Pancreas (tissue), 10 donors: ENCODE measurements at regions of chr13 and their contacts with region 1.

Region 1: DNA sequence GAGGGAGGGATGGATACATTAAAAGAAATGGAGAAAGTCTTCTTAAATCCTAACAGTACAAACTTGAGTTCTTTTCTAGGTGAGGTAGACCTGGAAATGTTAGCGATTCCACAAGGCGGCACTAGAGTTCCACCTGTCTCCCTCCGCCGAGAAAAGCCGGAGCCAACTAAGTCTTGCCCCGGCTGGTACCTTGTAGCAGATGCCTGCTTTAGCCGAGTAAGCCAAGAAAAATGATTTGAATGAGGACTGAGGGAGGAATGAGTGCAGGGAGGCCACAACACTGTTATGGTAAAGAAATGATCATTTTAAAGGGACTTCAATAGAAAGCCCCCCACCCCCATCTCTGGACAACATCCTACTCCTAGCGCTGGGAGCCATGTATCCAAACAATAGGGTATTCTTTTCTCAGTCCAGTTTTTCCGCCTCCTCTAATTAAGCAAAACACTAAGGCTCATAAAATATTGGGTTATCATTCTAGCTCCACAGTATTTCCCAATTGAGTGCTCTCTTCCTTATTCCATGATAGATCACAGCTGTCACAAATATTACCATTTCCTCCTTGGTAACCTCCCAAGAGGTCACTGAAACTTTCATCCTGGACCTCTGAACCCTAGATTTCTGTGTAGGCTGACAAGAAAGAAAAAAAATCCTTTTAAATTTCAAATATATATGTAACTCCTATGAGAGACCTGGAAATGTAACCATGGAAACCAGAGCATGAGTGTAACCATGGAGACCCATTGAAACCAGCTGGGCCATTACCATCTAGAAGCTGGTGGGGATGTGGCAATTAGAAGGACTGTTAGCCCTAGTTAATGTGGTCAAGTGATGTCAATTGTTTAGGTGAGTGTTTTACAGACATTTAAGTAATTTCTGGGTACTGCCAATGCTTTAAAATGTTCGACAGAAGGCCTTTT is 58.3 kb downstream of the GPALPP1 start:
- DNase-seq: peak; percentile 56 to 83 (median 66)
- ATAC-seq: peak; percentile 98 to 100 (median 99)
- H3K4me3 ChIP-seq: peak overlapping the region in 3 of 4 donors; percentile 11 to 38 (median 36)
- H3K27ac ChIP-seq: no peak overlapping the region
- H3K4me1 ChIP-seq: no peaks in the 10 kb centered on the region
- H3K27me3 ChIP-seq: no peaks in the 10 kb centered on the region
- CTCF ChIP-seq: peak; percentile 25 to 73 (median 67)

Region 2: GRCh38 chr13:45149964-45150363 is 102.3 kb after region 1 on chr13:
- intact Hi-C with region 1: no loop called
- DNase-seq: no peak
- ATAC-seq: no peak
- H3K4me3 ChIP-seq: no peak overlapping the region
- H3K27ac ChIP-seq: no peak overlapping the region
- H3K4me1 ChIP-seq: no peaks in the 10 kb centered on the region
- H3K27me3 ChIP-seq: no peaks in the 10 kb centered on the region
- CTCF ChIP-seq: no peak

Region 3: GRCh38 chr13:45280751-45281634 is 233.3 kb after region 1 on chr13:
- intact Hi-C with region 1: loop called in 1 of 3 experiments (anchors 2 kb)
- DNase-seq: peak; percentile 41 to 72 (median 63)
- ATAC-seq: peak; percentile 92 to 100 (median 98)
- H3K4me3 ChIP-seq: no peak overlapping the region
- H3K27ac ChIP-seq: no peak overlapping the region
- H3K4me1 ChIP-seq: no peaks in the 10 kb centered on the region
- H3K27me3 ChIP-seq: no peaks in the 10 kb centered on the region
- CTCF ChIP-seq: peak in 3 of 4 donors; percentile 4 to 62 (median 44)

Region 4: DNA sequence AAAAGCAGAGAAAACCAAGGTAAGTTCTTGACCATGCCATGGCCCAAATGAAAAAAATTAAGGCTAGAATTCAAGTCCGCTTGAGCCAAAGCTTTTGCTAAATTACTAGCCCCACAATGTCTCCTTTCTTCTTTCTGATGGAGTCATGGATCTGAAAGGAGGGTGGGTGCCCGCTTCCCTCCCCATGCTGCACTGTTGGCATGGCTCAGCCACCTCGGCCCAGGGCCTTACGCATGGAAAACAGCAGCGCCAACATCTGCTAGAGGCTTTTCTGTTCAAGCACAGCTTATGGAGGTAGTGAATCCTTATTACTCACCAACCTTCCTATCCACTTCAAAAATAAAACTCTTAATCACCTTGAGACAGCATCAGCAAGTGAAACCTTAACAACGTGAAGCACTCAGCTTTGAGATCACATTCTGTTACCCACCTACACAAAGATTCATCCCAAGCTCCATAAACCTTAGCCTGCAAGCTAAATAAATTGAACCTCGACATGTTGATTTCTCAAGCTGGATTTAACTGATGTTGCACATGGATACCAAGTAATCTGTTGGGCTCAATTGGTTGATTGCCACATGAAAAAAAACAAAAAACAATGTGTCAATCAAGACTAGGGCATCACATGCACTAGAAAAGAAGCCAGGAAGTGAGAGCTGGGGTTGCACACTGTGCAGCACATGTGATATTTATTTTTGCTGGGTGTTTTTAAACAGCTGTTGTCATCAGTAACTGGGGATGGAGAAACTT is 250.0 kb after region 1 on chr13:
- intact Hi-C with region 1: loop called (anchors 10 kb)
- DNase-seq: no peak
- ATAC-seq: no peak
- H3K4me3 ChIP-seq: no peak overlapping the region
- H3K27ac ChIP-seq: no peak overlapping the region
- H3K4me1 ChIP-seq: no peaks in the 10 kb centered on the region
- H3K27me3 ChIP-seq: peaks cover 0 to 4% (median 0%) of the 10 kb centered on the region in 4 donors
- CTCF ChIP-seq: no peak

Region 5: DNA sequence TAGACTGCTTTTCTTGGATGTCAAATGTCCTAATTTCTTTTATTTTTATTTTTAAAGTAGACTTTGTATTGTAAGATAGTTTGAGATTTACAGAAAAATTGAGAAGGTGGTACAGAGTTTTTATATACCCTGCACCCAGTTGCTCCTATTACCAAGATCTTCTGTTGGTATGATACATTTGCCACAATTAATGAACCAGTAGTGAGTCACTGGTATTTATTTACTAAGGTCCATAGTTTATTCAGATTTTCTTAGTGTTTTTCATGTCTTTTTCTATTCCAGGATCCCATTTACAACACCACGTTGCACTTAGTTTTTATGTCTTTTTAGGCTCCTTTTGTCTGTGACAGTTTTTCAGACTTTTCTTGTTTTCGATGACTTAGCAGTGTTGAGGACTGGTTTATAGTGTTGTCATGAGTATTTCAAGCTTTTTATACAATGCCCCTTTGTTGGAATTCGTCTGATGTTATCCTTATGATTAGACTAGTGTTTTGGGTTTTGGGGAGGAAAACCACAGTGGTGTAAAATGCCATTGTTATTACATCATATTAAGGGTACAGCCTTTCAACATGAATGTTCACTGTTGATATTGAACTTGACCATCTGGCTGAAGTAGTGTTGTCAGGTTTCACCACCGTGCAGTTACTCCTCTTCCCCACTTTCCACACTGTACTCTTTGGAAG is 453.0 kb after region 1 on chr13:
- intact Hi-C with region 1: no loop called
- DNase-seq: no peak
- ATAC-seq: peak in 3 of 4 donors; percentile 41 to 64 (median 57)
- H3K4me3 ChIP-seq: no peak overlapping the region
- H3K27ac ChIP-seq: peak overlapping the region in 2 of 4 donors; percentile 1 to 18
- H3K4me1 ChIP-seq: peaks cover 5 to 15% (median 7%) of the 10 kb centered on the region in 3 donors
- H3K27me3 ChIP-seq: no peaks in the 10 kb centered on the region
- CTCF ChIP-seq: no peak